ENCODE measurements at regions of chr3 and their contacts with region 1.

Region 1: GRCh38 chr3:123161167-123161566 is 40.6 kb upstream of the SEC22A start:
- DNase-seq: peak in 1 of 2 experiments; percentile 73
- H3K4me3 ChIP-seq: no peak overlapping the region
- H3K27ac ChIP-seq: no peak overlapping the region
- H3K4me1 ChIP-seq: no peaks in the 10 kb centered on the region
- H3K27me3 ChIP-seq: no peaks in the 10 kb centered on the region
- CTCF ChIP-seq: peak; percentile 62 to 67 (median 64)
- EP300 ChIP-seq: no peak
- POLR2A ChIP-seq: no peak
- RAD21 ChIP-seq: peak; percentile 60 to 67

Region 2: DNA sequence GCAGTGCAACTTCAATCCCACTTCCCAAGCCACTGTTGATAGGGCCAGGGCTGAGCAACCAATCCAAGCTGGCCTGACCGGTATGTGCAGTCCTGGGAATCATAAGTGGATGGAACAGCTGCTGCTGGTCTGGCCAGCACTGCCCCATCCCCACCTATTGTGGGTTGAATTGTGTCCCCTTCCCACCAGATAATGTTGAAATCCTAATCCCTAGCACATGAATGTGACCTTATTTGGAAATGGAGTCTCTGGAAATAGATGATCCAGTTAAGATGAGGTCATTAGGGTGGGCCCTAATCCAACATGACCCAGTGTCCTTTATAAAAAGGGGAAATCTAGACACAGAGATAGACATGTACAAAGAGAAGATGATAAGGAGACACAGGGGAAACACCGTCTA is 108.1 kb before region 1 on chr3:
- CTCF ChIA-PET with region 1: no interaction called
- POLR2A ChIA-PET with region 1: no interaction called
- DNase-seq: no peak
- H3K4me3 ChIP-seq: no peak overlapping the region
- H3K27ac ChIP-seq: no peak overlapping the region
- H3K4me1 ChIP-seq: no peaks in the 10 kb centered on the region; a peak in 3 of 7 replicates
- H3K27me3 ChIP-seq: no peaks in the 10 kb centered on the region
- CTCF ChIP-seq: no peak
- EP300 ChIP-seq: no peak
- POLR2A ChIP-seq: no peak
- RAD21 ChIP-seq: no peak

Region 3: DNA sequence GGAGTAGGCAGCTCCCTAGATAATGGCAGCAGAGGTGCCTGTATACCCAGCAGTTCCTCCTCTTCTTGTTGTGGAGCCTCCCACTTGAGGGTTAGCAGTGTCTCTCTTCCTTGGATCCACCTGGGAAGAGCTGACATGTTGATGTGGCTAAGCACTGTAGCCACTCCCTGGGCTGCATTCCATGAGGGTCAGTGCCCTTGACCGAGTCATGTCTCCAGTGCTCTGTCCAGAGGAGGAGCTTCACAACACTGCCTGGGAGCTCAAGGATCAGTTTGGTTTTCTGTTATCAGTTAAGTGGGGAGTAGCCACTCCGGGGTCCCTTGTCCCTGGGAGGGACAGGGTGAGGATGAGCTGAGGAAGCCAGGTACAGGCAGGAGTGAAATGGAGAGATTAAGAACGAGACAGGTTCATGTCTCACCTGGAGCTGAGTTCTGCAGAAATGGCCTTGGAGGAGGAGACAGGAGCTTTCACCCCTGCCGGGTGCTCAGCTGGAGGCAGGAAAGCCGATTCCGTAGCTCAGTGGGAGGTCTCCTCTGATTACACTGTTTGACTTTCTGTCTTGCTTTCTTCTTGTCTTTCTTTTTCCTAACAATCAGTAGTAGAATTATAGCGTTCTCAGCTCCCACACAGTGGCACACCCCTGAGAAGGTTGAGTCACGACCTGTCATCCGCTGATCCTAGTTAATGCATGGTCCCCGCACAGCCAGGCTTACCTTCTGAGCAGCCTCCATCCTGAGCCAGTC is 17.3 kb before region 1 on chr3:
- CTCF ChIA-PET with region 1: interaction called, 10 read pairs
- POLR2A ChIA-PET with region 1: interaction called, 3 read pairs
- DNase-seq: peak in 1 of 2 experiments; percentile 38
- H3K4me3 ChIP-seq: no peak overlapping the region
- H3K27ac ChIP-seq: no peak overlapping the region
- H3K4me1 ChIP-seq: peaks cover 3 to 7% (median 6%) of the 10 kb centered on the region in 4 experiments; a peak in 5 of 7 replicates
- H3K27me3 ChIP-seq: no peaks in the 10 kb centered on the region
- CTCF ChIP-seq: no peak
- EP300 ChIP-seq: no peak
- POLR2A ChIP-seq: no peak
- RAD21 ChIP-seq: no peak

Measured in H1 (cell line).